ENCODE measurements at regions of chr14 and their contacts with region 1.

Region 1: GRCh38 chr14:24089890-24090289 is 4.2 kb upstream of the PCK2 start:
- DNase-seq: no peak

Region 2: DNA sequence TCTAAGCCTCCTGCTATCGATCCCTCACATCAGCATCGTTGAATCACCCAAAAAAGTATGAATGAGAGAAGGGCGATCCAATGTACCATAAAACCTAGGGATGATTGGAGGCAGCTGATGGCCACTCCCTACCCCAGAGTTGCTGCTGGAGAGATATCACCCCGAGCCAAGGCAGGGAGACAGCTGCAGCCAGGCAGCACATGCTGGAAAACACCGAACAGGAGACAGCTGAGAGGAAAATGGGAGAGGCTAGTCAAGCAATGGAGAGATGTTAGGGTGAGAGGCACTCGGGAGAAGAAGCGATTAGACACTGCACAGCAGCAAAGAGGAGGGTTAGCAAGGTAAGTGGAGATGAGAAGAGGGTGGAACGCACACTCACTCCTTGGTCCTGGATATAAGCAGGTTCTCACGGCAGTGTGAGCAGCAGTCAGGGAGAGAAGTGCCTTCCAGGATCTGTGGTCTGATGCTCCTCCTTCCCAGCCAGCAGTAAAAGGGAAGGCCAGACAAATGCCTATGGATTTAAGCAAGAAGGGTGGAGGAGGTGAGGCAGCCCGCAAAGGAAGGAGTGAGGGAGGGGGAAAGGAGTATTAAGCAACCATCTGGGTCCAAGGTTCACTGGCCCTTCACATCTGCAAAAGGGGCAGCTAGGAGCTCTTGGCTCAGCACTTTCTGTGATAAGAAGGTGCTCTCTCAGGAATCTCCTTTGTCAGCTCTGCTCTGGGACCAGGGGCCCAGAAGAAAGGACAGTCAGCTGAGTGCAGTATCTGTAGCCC is 1274.8 kb before region 1 on chr14 and contains the start of gene SLC7A7:
- intact Hi-C with region 1: no loop called
- DNase-seq: no peak
- total RNA-seq, gene SLC7A7: 11.4 to 17.5 TPM

Region 3: DNA sequence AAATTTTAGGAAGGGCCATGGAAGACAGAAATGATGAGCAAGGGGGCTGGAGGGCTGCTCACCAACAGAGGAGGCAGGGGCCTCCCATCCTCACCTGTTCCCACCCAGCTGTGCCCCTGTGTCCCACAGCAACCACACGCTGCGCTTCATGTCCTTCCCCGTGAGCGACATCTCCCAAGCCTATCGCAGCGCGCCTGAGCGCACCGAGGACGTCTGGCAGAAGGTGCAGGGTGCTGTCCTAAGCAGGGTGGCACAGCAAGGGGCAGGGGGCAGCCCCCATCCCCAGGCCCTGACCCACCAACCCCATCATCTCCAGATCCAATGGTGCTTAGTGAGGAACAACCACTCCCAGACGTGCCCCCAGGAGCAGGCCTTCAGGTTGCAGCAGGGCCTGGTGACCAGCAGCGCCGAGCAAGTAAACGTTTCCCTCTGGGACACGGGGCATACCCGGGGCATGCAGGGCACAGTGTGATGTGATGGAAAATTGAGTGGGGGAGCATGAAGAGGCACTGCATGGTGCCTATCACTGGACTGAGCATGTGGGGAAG is 30.0 kb before region 1 on chr14:
- intact Hi-C with region 1: loop called in 1 of 2 experiments (anchors 2 kb)
- DNase-seq: peak; percentile 62

Measured in posterior vena cava (tissue), 2 donors.